Caco-2 (cell line): ENCODE measurements at regions of chr1 and their contacts with region 1.

Region 1: DNA sequence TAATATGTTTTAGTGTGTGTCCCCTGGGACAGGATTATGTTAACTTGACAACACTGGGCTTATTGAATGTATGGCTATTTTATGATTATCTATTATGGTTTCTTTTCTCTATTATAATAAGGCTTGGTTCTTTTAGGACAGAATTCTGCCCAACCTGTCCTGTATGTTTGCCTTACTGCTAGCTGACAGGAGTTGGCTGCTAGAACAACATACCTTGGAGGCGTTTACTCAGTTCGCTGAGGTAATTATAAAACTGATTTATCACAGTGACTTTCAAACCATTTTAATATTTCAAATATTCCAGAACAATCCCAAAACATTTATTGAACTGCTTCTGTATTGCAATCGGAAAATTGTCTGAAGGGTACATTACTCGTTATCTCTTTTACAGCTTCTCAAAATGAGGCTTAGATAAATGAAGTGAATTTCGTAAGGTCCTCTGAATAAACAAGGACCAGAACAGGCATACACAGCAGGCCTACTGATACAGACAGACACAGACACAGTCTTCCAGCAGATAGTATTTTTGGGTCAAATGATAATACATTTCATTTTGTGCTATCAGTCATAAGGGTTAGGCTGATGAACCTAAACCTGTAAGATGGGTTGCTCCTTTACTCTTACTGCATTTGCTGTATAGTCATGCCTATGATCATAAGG is 44.2 kb downstream of the SCYL3 start:
- DNase-seq: peak in 1 of 2 experiments; percentile 18
- H3K4me3 ChIP-seq: no peak overlapping the region
- H3K4me3 Mint-ChIP-seq: no peak overlapping the region
- H3K27ac Mint-ChIP-seq: no peak overlapping the region
- H3K4me1 ChIP-seq: peaks cover 13% of the 10 kb centered on the region
- H3K4me1 Mint-ChIP-seq: peaks cover 8% of the 10 kb centered on the region
- H3K27me3 ChIP-seq: no peaks in the 10 kb centered on the region
- H3K27me3 Mint-ChIP-seq: no peaks in the 10 kb centered on the region
- CTCF ChIP-seq: no peak

Region 2: GRCh38 chr1:169833179-169833901 is 16.2 kb before region 1 on chr1:
- CTCF ChIA-PET with region 1: no interaction called
- POLR2A ChIA-PET with region 1: no interaction called
- intact Hi-C with region 1: loop called (anchors 1 kb)
- DNase-seq: no peak
- H3K4me3 ChIP-seq: no peak overlapping the region
- H3K4me3 Mint-ChIP-seq: no peak overlapping the region
- H3K27ac Mint-ChIP-seq: no peak overlapping the region
- H3K4me1 ChIP-seq: no peaks in the 10 kb centered on the region
- H3K4me1 Mint-ChIP-seq: no peaks in the 10 kb centered on the region
- H3K27me3 ChIP-seq: no peaks in the 10 kb centered on the region
- H3K27me3 Mint-ChIP-seq: no peaks in the 10 kb centered on the region
- CTCF ChIP-seq: no peak